HEK293 (cell line): ENCODE measurements at regions of chrX and their contacts with region 1.

Region 1: GRCh38 chrX:140050906-140051305 is 85.6 kb upstream of the CXorf66 start:
- H3K4me3 ChIP-seq: no peak overlapping the region
- H3K27ac ChIP-seq: no peak overlapping the region
- H3K4me1 ChIP-seq: no peaks in the 10 kb centered on the region
- CTCF ChIP-seq: no peak

Region 2: GRCh38 chrX:139826065-139827044 is 224.6 kb before region 1 on chrX:
- CTCF ChIA-PET with region 1: no interaction called
- POLR2A ChIA-PET with region 1: no interaction called
- H3K4me3 ChIP-seq: no peak overlapping the region
- H3K27ac ChIP-seq: no peak overlapping the region
- H3K4me1 ChIP-seq: peaks cover 17% of the 10 kb centered on the region; the same call in 1 of the 2 replicates
- CTCF ChIP-seq: no peak

Region 3: DNA sequence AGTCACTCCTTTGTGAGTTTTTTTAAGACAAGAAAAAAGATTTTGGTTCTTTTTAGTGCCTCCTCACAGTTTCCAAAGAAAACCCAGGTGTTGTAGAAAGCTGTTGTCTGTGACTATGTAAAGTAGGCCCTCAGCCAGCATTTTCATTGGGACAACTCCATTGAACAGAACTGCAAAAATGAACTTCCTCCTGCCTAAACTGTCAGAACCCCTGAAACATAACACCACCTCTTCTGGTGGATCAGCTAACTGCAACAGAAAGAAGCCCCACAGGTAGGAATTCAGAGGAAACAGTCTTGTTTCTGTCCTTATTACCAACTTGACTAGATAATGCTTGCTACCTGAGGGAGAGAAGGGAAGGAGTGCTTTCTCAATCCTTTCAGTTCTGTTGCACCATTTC is 114.6 kb before region 1 on chrX:
- CTCF ChIA-PET with region 1: no interaction called
- POLR2A ChIA-PET with region 1: no interaction called
- H3K4me3 ChIP-seq: no peak overlapping the region
- H3K27ac ChIP-seq: no peak overlapping the region
- H3K4me1 ChIP-seq: peaks cover 5% of the 10 kb centered on the region
- CTCF ChIP-seq: no peak

Region 4: GRCh38 chrX:140229187-140229586 is 178.3 kb after region 1 on chrX:
- CTCF ChIA-PET with region 1: no interaction called
- POLR2A ChIA-PET with region 1: no interaction called
- H3K4me3 ChIP-seq: no peak overlapping the region
- H3K27ac ChIP-seq: no peak overlapping the region
- H3K4me1 ChIP-seq: no peaks in the 10 kb centered on the region
- CTCF ChIP-seq: no peak

Region 5: DNA sequence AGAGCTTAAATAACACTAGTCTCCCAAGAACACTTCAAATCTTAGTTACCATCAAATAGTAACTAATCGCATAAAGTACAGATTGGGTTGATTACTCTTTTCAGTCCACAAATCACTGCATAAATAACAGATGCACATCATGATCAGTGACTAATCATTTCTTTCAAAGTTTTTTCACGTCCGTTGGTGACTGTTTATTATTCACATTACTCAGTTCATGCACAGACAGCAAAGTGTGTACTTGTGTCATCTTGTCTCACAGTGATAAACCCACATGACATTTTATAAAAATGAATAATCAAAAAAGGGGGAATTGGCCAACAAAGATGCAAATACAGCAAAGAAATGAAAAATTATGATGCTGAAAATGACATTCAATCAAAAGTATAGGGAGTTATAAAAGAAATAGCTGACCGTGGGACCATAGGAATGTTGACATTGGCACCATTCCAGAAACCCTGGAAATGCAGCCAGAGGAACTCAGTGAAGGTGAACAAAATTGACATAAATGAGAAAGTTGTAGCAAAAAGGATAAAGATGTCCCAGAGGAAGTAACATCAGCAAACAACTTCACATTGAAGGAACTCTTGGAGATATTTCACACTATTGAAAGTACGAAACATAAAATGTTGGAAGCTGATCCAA is 292.4 kb after region 1 on chrX:
- CTCF ChIA-PET with region 1: interaction called, 11 read pairs
- POLR2A ChIA-PET with region 1: no interaction called
- H3K4me3 ChIP-seq: no peak overlapping the region
- H3K27ac ChIP-seq: no peak overlapping the region
- H3K4me1 ChIP-seq: peaks cover 2% of the 10 kb centered on the region
- CTCF ChIP-seq: no peak